Transverse colon (tissue), 4 donors: ENCODE measurements at regions of chr1 and their contacts with region 1.

Region 1: GRCh38 chr1:56709269-56709880 is 64.3 kb downstream of the PRKAA2 start:
- DNase-seq: no peak
- H3K4me3 ChIP-seq: no peak overlapping the region
- H3K27ac ChIP-seq: no peak overlapping the region
- H3K4me1 ChIP-seq: no peaks in the 10 kb centered on the region
- H3K27me3 ChIP-seq: no peaks in the 10 kb centered on the region
- CTCF ChIP-seq: peak; percentile 55 to 69 (median 60)
- EP300 ChIP-seq: no peak
- POLR2A ChIP-seq: no peak

Region 2: DNA sequence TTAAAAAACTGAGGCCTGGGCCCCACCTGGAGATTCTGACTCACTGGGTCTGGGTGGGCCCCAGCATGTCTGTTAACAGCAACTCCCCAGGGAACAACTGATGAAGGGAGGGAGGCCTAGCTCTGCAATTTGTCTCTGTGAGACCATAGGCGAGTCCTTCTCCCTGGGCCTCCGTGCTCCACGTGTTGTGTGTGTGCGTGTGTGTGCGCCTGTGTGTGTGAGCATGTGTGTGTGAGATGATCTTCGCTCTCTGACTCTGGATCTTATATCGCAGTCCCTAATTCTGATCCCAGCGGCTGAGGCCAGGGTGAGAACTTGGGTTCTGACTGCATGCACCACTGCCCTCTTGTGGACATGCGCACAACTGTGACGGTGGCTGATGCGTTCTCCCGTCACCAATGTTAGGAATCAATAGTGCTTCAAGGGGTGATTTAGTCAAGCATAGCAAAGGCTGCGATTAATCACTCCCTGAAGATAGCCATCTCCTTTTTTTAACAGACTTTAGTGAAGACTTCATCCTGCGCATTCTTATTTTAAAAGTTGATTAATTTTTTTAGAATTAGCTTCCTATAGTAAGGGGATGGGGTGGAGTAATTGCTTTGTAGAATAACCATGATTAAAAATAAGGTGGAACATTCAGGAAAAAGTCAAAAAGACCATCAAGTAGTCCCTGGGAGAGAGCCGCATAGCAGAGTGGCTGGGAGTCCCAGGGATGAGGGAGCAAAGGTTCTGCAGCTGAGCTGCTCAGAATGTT is 1431.8 kb before region 1 on chr1:
- in situ Hi-C with region 1: loop called in 3 of 4 experiments (anchors 10 to 25 kb)
- intact Hi-C with region 1: no loop called
- DNase-seq: peak; percentile 84
- H3K4me3 ChIP-seq: no peak overlapping the region
- H3K27ac ChIP-seq: no peak overlapping the region
- H3K4me1 ChIP-seq: peaks cover 4 to 27% (median 6%) of the 10 kb centered on the region in 4 donors
- H3K27me3 ChIP-seq: no peaks in the 10 kb centered on the region
- CTCF ChIP-seq: peak; percentile 80 to 92 (median 84)
- EP300 ChIP-seq: no peak
- POLR2A ChIP-seq: no peak

Region 3: DNA sequence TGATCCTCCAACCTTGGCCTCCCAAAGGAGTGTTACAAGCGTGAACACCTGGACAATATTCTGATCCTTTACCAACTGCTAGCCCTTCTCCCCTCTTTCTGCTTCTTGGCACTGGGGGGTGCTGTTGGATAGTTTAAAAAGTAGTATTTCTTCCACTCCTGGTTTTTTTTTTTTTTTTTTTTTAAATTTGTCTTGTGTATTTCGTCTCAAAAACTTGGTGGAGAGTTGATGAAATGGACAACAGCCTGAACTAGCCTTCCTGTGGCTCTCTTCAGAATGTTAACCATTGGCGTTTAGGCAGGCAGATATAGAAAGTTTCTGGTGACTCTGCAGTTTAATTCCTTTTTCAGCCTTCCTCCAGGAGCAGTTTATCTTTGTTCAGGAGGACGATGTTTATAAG is 1424.5 kb before region 1 on chr1:
- in situ Hi-C with region 1: loop called in 3 of 4 experiments (anchors 10 to 25 kb)
- intact Hi-C with region 1: no loop called
- DNase-seq: no peak
- H3K4me3 ChIP-seq: no peak overlapping the region
- H3K27ac ChIP-seq: no peak overlapping the region
- H3K4me1 ChIP-seq: peaks cover 0 to 4% (median 0%) of the 10 kb centered on the region in 4 donors
- H3K27me3 ChIP-seq: no peaks in the 10 kb centered on the region
- CTCF ChIP-seq: peak; percentile 47 to 62 (median 50)
- EP300 ChIP-seq: no peak
- POLR2A ChIP-seq: no peak

Region 4: DNA sequence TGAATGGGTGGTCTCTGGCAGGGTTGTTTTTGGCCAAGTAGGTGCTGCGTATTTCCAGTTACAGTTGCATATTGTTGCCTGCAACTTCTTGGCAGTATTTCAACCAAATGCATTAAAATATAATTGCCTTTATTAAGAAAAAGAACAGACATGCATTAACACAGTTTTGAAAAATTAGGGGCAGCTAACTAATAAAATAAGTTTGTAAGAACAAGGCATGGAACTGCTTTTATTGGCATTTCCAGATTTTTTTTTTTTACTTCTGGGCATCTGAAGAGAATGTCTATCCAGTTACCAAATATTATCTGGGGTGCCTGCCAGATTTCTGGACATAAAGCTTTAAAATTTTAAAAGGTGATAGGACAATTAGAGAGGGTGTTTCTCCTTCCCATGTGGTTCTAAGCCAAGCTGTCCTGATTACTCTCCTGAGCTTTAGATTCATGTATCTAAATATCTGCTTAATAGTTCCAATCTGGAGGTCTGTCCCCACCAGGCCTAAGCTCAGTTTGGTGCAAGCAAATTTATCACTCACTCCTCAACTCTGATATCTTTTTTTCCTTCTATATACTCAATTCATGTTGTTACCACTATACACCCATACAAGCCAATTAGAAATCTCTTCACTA is 940.9 kb before region 1 on chr1:
- in situ Hi-C with region 1: no loop called
- intact Hi-C with region 1: no loop called
- DNase-seq: no peak
- H3K4me3 ChIP-seq: no peak overlapping the region
- H3K27ac ChIP-seq: no peak overlapping the region
- H3K4me1 ChIP-seq: no peaks in the 10 kb centered on the region
- H3K27me3 ChIP-seq: no peaks in the 10 kb centered on the region
- CTCF ChIP-seq: no peak
- EP300 ChIP-seq: no peak
- POLR2A ChIP-seq: no peak

Region 5: GRCh38 chr1:56627636-56628039 is 81.7 kb before region 1 on chr1:
- in situ Hi-C with region 1: no loop called
- intact Hi-C with region 1: no loop called
- DNase-seq: no peak
- H3K4me3 ChIP-seq: no peak overlapping the region
- H3K27ac ChIP-seq: no peak overlapping the region
- H3K4me1 ChIP-seq: no peaks in the 10 kb centered on the region
- H3K27me3 ChIP-seq: no peaks in the 10 kb centered on the region
- CTCF ChIP-seq: no peak
- EP300 ChIP-seq: no peak
- POLR2A ChIP-seq: no peak

Region 6: DNA sequence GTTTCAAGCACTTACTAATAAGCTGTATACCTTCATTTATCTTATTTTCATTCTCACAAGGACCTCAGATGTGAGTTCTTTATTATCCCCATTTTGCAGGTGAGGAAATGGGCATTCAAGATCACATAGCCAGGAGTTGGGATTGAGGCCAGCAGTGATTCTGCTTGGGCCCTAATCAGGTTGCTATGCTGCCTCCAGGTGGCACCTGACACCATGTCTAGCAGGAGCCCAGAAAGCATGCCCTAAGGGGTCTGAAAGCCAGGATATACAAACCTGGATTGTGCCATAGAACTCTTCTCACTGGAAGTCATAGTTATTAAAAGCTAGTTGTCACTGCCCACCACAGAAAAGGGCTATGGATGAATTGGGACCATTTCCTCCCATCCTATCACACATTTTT is 48.8 kb after region 1 on chr1:
- in situ Hi-C with region 1: no loop called
- intact Hi-C with region 1: no loop called
- DNase-seq: peak; percentile 27
- H3K4me3 ChIP-seq: no peak overlapping the region
- H3K27ac ChIP-seq: no peak overlapping the region
- H3K4me1 ChIP-seq: no peaks in the 10 kb centered on the region
- H3K27me3 ChIP-seq: no peaks in the 10 kb centered on the region
- CTCF ChIP-seq: peak in 2 of 5 experiments; percentile 29 to 36
- EP300 ChIP-seq: no peak
- POLR2A ChIP-seq: no peak

Region 7: DNA sequence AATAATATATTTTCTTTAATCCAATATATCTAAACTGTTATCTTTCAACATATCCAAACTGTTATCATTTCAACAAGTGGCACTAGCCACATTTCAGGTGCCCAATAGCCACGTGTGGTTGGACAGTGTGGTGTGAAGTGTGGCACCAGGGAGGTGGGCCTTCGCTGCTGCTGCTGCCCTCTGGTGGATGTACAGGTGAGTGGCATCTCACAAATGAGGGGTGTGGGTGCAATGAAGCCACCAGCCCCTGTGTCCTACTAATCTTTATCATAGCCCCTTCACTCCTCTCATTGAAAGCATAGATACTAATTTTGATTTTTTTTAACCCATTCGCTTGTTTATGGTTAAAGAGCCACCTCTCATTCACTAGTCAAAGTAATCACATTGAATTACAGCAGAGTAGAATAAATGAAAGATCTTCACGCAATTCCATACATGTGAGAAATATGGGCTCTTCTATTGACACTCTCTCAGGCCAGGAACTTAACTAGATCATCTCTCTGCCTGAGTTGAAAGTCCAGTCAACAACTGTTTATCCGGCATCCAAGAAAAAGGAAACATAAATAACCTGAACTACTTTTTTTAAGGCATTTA is 1338.0 kb after region 1 on chr1:
- in situ Hi-C with region 1: no loop called
- intact Hi-C with region 1: no loop called
- DNase-seq: peak; percentile 21
- H3K4me3 ChIP-seq: no peak overlapping the region
- H3K27ac ChIP-seq: no peak overlapping the region
- H3K4me1 ChIP-seq: no peaks in the 10 kb centered on the region
- H3K27me3 ChIP-seq: no peaks in the 10 kb centered on the region
- CTCF ChIP-seq: peak; percentile 47 to 67 (median 50)
- EP300 ChIP-seq: no peak
- POLR2A ChIP-seq: no peak